ENCODE measurements at regions of chr16 and their contacts with region 1.

Region 1: GRCh38 chr16:72832621-72833248 is 215.2 kb downstream of the ZFHX3 start:
- DNase-seq: peak; percentile 71 to 89 (median 86)
- H3K4me3 ChIP-seq: no peak overlapping the region
- H3K27ac ChIP-seq: no peak overlapping the region
- H3K4me1 ChIP-seq: no peaks in the 10 kb centered on the region
- H3K27me3 ChIP-seq: no peaks in the 10 kb centered on the region
- CTCF ChIP-seq: peak; percentile 80 to 88 (median 81)
- EP300 ChIP-seq: no peak
- POLR2A ChIP-seq: no peak

Region 2: GRCh38 chr16:73047518-73048291 is 215.0 kb after region 1 on chr16 and contains the start of gene ZFHX3:
- intact Hi-C with region 1: loop called in 2 of 4 experiments (anchors 10 kb)
- DNase-seq: peak; percentile 48 to 72 (median 67)
- H3K4me3 ChIP-seq: peak within 1 kb of the TSS; percentile 85
- H3K27ac ChIP-seq: peak within 1 kb of the TSS; percentile 42 to 64
- H3K4me1 ChIP-seq: peaks cover 7% of the 10 kb centered on the region
- H3K27me3 ChIP-seq: no peaks in the 10 kb centered on the region
- CTCF ChIP-seq: no peak
- EP300 ChIP-seq: no peak
- POLR2A ChIP-seq: no peak
- total RNA-seq, gene ZFHX3: 5.5 to 17.6 (median 12.6) TPM

Region 3: DNA sequence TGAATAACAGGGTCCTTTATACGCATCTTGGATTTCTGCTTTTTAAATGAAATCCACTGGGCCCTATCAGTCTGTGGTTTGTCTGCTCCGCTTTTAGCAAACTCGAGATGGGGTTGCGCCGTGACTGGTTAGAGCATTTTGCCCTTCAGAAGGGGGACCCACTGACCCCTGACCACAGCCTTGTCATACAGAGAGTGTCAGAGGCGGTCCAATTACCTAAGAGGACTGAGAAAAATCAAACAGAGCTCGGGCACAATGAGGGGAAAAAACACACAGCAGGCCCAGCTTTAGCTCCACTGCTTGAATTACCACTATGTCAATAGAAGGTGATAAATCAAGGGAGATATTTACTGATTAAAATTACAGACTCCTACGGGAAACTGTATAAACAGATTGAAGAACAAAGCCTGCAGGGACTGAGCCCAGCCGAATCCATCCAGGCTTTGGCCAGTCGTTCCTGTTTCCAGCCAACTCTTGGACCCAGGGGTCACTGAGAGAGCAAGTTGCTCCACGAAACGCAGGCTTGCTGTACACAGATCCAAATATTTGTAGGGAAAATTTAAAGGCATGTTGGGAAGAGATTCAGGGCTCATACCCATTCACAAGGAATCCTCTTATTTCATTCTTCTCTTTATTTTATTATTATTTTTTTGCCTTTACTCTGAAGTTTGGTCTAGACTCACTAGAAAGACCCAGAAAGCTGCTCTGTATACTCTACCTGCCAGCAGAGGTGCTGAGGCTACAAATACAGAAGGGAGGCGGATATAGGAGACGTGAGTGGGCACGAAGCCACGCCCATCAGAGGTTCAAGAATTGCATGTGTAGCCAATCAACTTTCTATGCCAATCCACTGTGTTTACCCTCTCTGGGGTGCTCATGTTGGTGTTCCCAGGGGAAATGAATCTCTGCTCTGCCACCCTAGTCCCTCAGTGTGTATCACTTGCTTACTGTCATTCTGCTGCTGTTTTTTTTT is 347.3 kb after region 1 on chr16:
- intact Hi-C with region 1: loop called in 1 of 4 experiments (anchors 10 kb)
- DNase-seq: peak; percentile 27 to 64 (median 59)
- H3K4me3 ChIP-seq: no peak overlapping the region
- H3K27ac ChIP-seq: no peak overlapping the region
- H3K4me1 ChIP-seq: peaks cover 3% of the 10 kb centered on the region
- H3K27me3 ChIP-seq: no peaks in the 10 kb centered on the region
- CTCF ChIP-seq: no peak
- EP300 ChIP-seq: no peak
- POLR2A ChIP-seq: no peak

Region 4: GRCh38 chr16:73196670-73197069 is 363.9 kb after region 1 on chr16:
- intact Hi-C with region 1: loop called in 1 of 4 experiments (anchors 10 kb)
- DNase-seq: peak in 4 of 5 donors; percentile 33 to 56 (median 44)
- H3K4me3 ChIP-seq: no peak overlapping the region
- H3K27ac ChIP-seq: no peak overlapping the region
- H3K4me1 ChIP-seq: no peaks in the 10 kb centered on the region
- H3K27me3 ChIP-seq: no peaks in the 10 kb centered on the region
- CTCF ChIP-seq: peak in 1 of 3 donors; percentile 44
- EP300 ChIP-seq: no peak
- POLR2A ChIP-seq: no peak

Measured in ovary (tissue), 10 donors.